Gastrocnemius medialis (tissue), 4 donors: ENCODE measurements at regions of chr4 and their contacts with region 1.

Region 1: DNA sequence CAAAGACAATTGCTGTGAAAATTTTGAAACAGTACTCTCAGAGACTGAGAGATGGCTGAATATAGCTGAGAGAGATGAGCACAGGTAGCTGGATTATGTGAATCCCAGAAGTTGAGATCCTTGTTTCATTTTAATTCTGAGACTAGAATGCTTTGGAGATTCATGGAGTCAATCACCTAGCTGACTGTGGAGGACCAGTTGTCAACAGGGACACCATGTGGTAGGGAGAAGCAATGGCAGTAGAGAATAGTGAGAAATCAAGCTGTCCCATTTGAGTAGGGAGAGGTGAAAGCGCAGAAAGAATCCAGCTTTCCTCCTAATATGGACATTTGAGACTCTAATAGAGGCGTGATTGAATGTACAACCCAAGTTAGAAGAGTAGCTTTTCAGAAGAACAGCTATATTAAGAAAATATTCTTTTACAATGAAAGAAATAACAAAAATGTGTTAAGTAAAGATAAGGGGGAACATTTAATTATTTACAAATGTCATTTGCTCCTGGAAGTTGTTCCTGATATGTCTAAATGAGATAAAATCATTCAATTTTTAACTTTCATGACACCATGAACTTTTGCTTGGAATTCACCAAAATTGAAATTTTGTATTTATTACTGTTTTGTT is 30.3 kb upstream of the GLRB start:
- DNase-seq: peak in 1 of 2 donors; percentile 13
- ATAC-seq: peak; percentile 80 to 82
- H3K4me3 ChIP-seq: no peak overlapping the region
- H3K27ac ChIP-seq: no peak overlapping the region
- H3K4me1 ChIP-seq: no peaks in the 10 kb centered on the region
- H3K27me3 ChIP-seq: no peaks in the 10 kb centered on the region
- CTCF ChIP-seq: peak; percentile 38 to 73 (median 69)
- POLR2A ChIP-seq: no peak

Region 2: DNA sequence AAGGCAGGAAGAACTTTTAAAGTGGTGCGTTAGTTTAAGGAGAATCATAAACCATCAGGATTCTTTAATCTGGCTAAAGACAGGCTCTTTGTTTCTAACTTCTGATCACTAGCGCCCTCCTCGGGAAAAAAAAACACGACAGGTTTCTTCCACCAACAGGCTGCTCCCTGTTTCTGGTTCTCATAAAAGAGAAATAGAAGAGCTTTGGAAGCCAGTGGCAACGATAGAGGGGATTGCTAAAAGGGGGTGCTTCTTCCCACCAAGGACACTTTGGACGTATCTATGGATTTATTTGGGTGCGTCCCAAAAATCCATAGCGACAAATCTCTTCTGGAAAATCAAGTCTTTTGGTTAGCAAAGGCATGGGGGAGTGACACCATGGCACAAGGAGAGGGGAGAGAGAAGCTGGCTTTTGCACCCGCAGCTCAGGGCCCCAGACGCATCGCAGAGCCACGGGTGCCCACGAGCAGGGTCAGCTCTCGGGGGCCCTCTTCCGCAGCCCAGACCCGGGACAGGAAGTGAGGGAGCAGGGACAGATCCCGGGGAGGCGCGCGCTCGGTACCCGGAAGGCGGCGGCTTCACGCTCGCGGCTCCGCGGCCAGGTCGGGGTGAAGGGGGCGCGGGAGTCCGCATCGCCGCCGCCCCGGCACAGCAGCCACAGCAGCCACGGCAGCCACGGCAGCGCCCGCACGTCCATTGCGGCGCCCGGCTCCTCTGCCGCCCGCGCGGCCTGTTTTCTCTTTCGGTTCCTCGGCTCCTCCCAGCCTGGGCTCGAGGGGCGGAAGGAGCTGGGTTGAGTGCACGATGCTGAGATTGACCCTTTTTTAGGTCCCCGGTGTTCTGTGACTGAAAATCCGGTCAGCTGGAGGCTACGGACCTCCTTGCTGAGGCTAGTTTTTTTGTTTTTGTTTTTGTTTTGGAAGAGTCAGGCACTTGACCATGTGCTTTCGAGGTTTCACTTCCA is 1092.2 kb before region 1 on chr4 and contains the start of gene CTSO:
- in situ Hi-C with region 1: no loop called
- intact Hi-C with region 1: loop called (anchors 10 kb)
- DNase-seq: peak; percentile 23 to 37
- ATAC-seq: peak; percentile 83 to 89
- H3K4me3 ChIP-seq: peak within 1 kb of the TSS; percentile 57 to 86 (median 78)
- H3K27ac ChIP-seq: peak within 1 kb of the TSS; percentile 73 to 88 (median 82)
- H3K4me1 ChIP-seq: no peaks in the 10 kb centered on the region
- H3K27me3 ChIP-seq: no peaks in the 10 kb centered on the region
- CTCF ChIP-seq: peak; percentile 28 to 61 (median 36)
- POLR2A ChIP-seq: peak; percentile 13 to 37
- total RNA-seq, gene CTSO: 2.9 to 6.4 (median 3.9) TPM

Region 3: GRCh38 chr4:156475322-156475721 is 570.3 kb before region 1 on chr4:
- in situ Hi-C with region 1: loop called (anchors 5 to 10 kb)
- intact Hi-C with region 1: loop called (anchors 2 kb)
- DNase-seq: no peak
- ATAC-seq: peak; percentile 50 to 66
- H3K4me3 ChIP-seq: no peak overlapping the region
- H3K27ac ChIP-seq: no peak overlapping the region
- H3K4me1 ChIP-seq: no peaks in the 10 kb centered on the region
- H3K27me3 ChIP-seq: no peaks in the 10 kb centered on the region
- CTCF ChIP-seq: peak in 4 of 5 experiments; percentile 20 to 47 (median 34)
- POLR2A ChIP-seq: no peak

Region 4: GRCh38 chr4:156594624-156595023 is 451.0 kb before region 1 on chr4:
- in situ Hi-C with region 1: no loop called
- intact Hi-C with region 1: loop called (anchors 10 kb)
- DNase-seq: peak; percentile 13 to 30
- ATAC-seq: no peak
- H3K4me3 ChIP-seq: no peak overlapping the region
- H3K27ac ChIP-seq: no peak overlapping the region
- H3K4me1 ChIP-seq: no peaks in the 10 kb centered on the region
- H3K27me3 ChIP-seq: no peaks in the 10 kb centered on the region
- CTCF ChIP-seq: no peak
- POLR2A ChIP-seq: no peak